Right ventricle myocardium superior (tissue), 1 donor: ENCODE measurements at regions of chr1 and their contacts with region 1.

Region 1: DNA sequence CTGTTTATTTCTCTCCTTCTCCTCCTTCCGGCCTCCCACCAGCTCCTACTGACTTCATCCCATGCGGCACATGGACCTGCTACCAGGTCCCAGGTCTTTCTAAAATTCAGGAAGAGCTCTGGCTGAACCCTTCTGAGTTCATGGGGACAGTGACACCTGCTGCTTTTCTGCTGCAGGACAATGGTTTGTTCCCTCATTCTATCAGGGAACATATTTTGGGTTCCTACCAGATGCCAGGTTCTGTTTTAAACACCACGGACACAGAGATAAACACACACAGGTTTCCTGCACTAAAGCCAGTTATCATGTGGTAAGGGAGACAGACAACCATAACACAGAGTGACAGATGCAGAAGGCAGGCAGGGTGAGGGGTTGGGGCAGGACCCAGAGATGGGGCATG is 114.0 kb upstream of the RAB4A start:
- DNase-seq: no peak
- ATAC-seq: peak; percentile 87

Region 2: DNA sequence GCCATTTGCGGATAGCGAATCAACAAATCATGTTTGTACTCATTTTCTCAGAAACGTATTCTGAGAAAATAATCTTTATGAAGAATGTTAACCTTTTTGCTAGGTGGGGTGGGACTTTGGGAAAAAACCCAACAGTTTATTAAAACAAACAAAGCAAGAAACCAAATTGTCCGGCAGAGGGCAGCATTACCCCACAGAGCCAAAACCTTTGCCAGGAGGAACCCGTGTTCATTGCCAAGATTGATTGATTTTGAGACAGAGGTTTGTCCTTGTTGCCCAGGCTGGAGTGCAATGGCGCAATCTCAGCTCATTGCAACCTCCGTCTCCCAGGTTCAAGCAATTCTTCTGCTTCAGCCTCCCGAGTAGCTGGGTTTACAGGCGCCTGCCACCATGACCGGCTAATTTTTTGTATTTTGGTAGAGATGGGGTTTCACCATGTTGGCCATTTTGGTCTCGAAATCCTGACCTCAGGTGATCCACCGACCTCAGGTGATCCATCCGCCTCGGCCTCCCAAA is 492.4 kb before region 1 on chr1:
- intact Hi-C with region 1: loop called (anchors 10 kb)
- DNase-seq: peak; percentile 78
- ATAC-seq: peak; percentile 67

Region 3: DNA sequence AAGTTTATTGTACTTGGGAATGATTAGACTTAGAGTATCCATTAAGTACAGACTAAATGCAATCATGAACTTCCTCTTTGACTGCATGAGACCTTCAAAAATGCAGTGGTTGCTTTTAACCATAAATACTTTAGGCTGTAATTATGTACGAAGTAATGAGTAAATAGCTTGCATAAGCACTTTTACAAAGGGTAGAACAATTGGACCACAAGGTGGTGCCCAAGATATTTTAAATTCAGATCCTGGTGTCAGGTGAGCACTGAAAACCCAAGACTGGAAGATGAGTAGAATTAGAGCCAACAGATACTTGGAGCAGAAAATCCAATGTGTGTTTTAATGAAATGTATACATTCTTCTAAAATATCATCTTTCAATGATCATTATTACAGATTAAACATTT is 464.9 kb before region 1 on chr1:
- intact Hi-C with region 1: loop called (anchors 5 kb)
- DNase-seq: no peak
- ATAC-seq: peak; percentile 69

Region 4: GRCh38 chr1:228734881-228735801 is 421.7 kb before region 1 on chr1 and contains the start of gene RHOU:
- intact Hi-C with region 1: loop called (anchors 5 kb)
- DNase-seq: peak; percentile 87
- ATAC-seq: peak; percentile 97
- total RNA-seq, gene RHOU: 4.2 TPM

Region 5: DNA sequence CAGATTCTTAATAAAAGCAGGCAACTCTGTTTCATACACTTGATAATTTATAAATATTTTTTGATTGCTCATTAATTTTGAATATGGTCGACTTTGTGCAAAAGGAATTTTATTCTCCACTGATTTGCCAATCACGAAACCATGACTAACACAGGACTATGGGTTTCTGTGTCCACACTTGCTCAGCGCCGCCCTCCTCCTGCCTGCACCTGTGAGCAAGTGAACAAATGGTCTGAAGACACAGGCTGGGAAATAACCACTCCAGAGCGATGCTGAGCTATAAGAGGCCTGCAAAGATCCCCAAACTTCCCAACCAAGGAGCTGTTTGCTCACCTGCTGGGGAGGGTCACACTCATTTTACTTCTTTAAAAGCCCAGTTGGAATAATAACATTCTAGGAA is 382.1 kb after region 1 on chr1:
- intact Hi-C with region 1: no loop called
- DNase-seq: no peak
- ATAC-seq: no peak